ENCODE measurements at regions of chr19 and their contacts with region 1.

Region 1: DNA sequence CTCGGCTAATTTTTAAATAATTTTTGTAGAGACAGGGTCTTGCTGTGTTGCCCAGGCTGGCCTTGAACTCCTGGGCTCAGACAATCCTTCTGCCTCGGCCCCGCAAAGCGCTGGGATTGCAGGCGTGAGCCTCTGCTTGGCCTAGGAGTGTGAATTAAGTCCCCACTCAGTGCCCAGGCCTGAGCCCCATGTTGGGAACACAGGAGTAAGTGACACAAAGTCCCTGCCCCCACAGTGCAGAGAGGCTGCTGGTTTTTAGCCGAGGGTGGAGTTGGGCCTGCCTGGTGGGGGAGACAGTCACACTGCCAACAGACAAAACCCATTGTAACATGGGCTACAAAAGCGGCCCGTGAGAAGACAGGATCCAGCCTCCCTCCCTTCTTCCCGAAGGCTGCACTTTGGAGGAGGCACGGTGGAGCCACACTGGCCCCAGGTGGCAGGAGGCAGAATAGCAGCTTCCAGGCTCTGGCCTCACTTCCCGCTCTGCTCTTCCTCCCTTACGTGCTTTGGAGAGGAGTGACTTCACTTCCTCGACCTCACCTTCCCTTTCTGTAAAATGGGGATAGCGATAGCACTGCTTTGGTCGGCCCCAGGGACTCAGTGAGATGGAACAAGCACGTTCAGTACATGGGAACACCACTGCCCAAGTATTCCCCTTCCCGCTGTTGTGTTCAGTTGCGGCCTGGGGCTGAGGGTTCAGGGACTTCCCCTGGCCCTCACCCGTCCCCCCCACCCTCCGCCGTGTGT is 15.2 kb upstream of the EHD2 start:
- DNase-seq: peak; percentile 83 to 86
- H3K4me3 ChIP-seq: no peak overlapping the region
- H3K27ac ChIP-seq: peak overlapping the region; percentile 64 to 81
- H3K4me1 ChIP-seq: peaks cover 0 to 6% of the 10 kb centered on the region in 2 donors
- H3K27me3 ChIP-seq: no peaks in the 10 kb centered on the region
- CTCF ChIP-seq: peak; percentile 96 to 99 (median 98)
- POLR2A ChIP-seq: no peak

Region 2: GRCh38 chr19:47284324-47284899 is 413.6 kb before region 1 on chr19:
- intact Hi-C with region 1: loop called (anchors 10 kb)
- DNase-seq: peak in 1 of 2 donors; percentile 33
- H3K4me3 ChIP-seq: no peak overlapping the region
- H3K27ac ChIP-seq: no peak overlapping the region
- H3K4me1 ChIP-seq: no peaks in the 10 kb centered on the region
- H3K27me3 ChIP-seq: no peaks in the 10 kb centered on the region
- CTCF ChIP-seq: peak; percentile 74 to 91 (median 86)
- POLR2A ChIP-seq: no peak

Region 3: GRCh38 chr19:47436712-47437401 is 261.2 kb before region 1 on chr19:
- intact Hi-C with region 1: loop called (anchors 2 kb)
- DNase-seq: peak; percentile 76 to 82
- H3K4me3 ChIP-seq: no peak overlapping the region
- H3K27ac ChIP-seq: no peak overlapping the region
- H3K4me1 ChIP-seq: no peaks in the 10 kb centered on the region
- H3K27me3 ChIP-seq: no peaks in the 10 kb centered on the region
- CTCF ChIP-seq: peak; percentile 89 to 96 (median 94)
- POLR2A ChIP-seq: no peak